MCF 10A (cell line): ENCODE measurements at regions of chr17 and their contacts with region 1.

Region 1: GRCh38 chr17:72725433-72726068 is 366.9 kb downstream of the SLC39A11 start:
- DNase-seq: peak; percentile 72
- H3K4me3 Mint-ChIP-seq: no peak overlapping the region
- H3K27ac Mint-ChIP-seq: no peak overlapping the region
- H3K4me1 Mint-ChIP-seq: peaks cover 19% of the 10 kb centered on the region
- H3K27me3 Mint-ChIP-seq: no peaks in the 10 kb centered on the region
- CTCF ChIP-seq: peak; percentile 78

Region 2: DNA sequence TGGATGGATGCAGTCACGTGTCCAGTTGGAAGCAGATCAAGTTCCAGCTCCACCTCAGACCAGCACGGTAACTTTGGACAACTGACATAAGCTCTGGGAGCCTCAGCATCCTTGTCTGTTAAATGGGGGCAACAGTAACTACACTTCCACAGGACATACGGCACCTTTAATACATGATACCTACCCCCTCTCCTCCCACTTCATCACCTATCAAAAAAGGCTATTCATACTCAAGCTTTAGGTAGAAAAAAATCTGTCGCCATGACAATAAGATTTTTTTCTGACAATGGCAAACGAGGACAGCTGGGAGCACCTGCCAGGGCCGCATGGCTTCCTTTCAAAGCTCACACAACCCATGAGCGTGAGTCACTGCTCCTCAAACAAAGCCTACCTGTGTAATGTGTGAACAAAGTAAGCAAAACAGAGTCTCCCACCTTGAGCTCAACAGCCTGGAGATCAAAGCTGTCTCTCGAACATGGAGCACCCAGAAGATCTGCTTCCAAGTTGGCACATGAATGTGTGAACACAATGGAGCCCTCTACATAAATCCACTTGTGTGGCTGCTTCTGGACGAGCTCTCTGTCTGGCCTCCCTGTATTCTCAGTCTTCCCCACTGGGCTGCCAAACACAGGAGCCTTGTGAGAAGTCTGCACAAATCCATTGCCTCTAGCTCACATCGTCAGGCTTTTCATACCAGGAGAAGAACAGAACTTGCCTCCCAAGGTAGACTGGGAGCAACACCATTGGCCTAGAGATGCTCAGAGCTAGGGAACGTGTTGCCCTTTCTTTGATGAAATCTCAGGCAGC is 145.0 kb before region 1 on chr17:
- CTCF ChIA-PET with region 1: interaction called, 17 read pairs
- POLR2A ChIA-PET with region 1: no interaction called
- intact Hi-C with region 1: no loop called
- DNase-seq: peak; percentile 47
- H3K4me3 Mint-ChIP-seq: no peak overlapping the region
- H3K27ac Mint-ChIP-seq: peak overlapping the region; percentile 19
- H3K4me1 Mint-ChIP-seq: peaks cover 40% of the 10 kb centered on the region
- H3K27me3 Mint-ChIP-seq: no peaks in the 10 kb centered on the region
- CTCF ChIP-seq: no peak

Region 3: GRCh38 chr17:72743037-72743467 is 17.5 kb after region 1 on chr17:
- CTCF ChIA-PET with region 1: interaction called, 11 read pairs
- POLR2A ChIA-PET with region 1: interaction called, 3 read pairs
- intact Hi-C with region 1: no loop called
- DNase-seq: no peak
- H3K4me3 Mint-ChIP-seq: no peak overlapping the region
- H3K27ac Mint-ChIP-seq: no peak overlapping the region
- H3K4me1 Mint-ChIP-seq: no peaks in the 10 kb centered on the region
- H3K27me3 Mint-ChIP-seq: no peaks in the 10 kb centered on the region
- CTCF ChIP-seq: no peak

Region 4: DNA sequence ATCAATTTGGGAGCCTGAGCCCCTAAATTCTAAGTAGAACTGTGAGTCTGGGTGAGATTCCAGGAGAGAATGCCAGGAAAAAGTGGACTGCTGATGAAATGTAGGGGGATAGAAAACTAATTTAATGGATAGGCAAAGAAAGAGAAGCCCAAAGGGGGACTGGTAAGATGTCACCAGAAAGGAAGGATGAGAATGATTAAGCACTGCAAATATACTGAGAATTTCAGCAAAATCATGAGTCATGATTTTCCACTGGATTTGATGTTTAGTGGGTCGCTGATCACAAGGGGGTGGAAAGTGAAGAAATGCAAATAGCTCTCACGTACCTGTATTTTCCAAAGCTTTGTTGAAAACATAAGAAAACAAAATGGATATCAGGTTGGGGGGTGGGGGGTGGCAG is 165.2 kb after region 1 on chr17:
- CTCF ChIA-PET with region 1: no interaction called
- POLR2A ChIA-PET with region 1: no interaction called
- intact Hi-C with region 1: no loop called
- DNase-seq: no peak
- H3K4me3 Mint-ChIP-seq: no peak overlapping the region
- H3K27ac Mint-ChIP-seq: no peak overlapping the region
- H3K4me1 Mint-ChIP-seq: no peaks in the 10 kb centered on the region
- H3K27me3 Mint-ChIP-seq: no peaks in the 10 kb centered on the region
- CTCF ChIP-seq: no peak

Region 5: GRCh38 chr17:73156166-73156840 is 430.8 kb after region 1 on chr17:
- CTCF ChIA-PET with region 1: interaction called, 63 read pairs
- POLR2A ChIA-PET with region 1: no interaction called
- intact Hi-C with region 1: loop called (anchors 1 kb)
- DNase-seq: peak; percentile 68
- H3K4me3 Mint-ChIP-seq: no peak overlapping the region
- H3K27ac Mint-ChIP-seq: no peak overlapping the region
- H3K4me1 Mint-ChIP-seq: no peaks in the 10 kb centered on the region
- H3K27me3 Mint-ChIP-seq: peaks cover 26% of the 10 kb centered on the region
- CTCF ChIP-seq: peak; percentile 55

Region 6: GRCh38 chr17:73231841-73232586 is 506.5 kb after region 1 on chr17:
- CTCF ChIA-PET with region 1: interaction called, 9 read pairs
- POLR2A ChIA-PET with region 1: interaction called, 6 read pairs
- intact Hi-C with region 1: loop called (anchors 1 kb)
- DNase-seq: peak; percentile 93
- H3K4me3 Mint-ChIP-seq: peak overlapping the region; percentile 97
- H3K27ac Mint-ChIP-seq: peak overlapping the region; percentile 90
- H3K4me1 Mint-ChIP-seq: peaks cover 28% of the 10 kb centered on the region
- H3K27me3 Mint-ChIP-seq: no peaks in the 10 kb centered on the region
- CTCF ChIP-seq: no peak

Region 7: GRCh38 chr17:73371285-73371684 is 645.7 kb after region 1 on chr17:
- CTCF ChIA-PET with region 1: interaction called, 7 read pairs
- POLR2A ChIA-PET with region 1: no interaction called
- intact Hi-C with region 1: loop called (anchors 2 kb)
- DNase-seq: peak; percentile 48
- H3K4me3 Mint-ChIP-seq: no peak overlapping the region
- H3K27ac Mint-ChIP-seq: no peak overlapping the region
- H3K4me1 Mint-ChIP-seq: peaks cover 8% of the 10 kb centered on the region
- H3K27me3 Mint-ChIP-seq: peaks cover 53% of the 10 kb centered on the region
- CTCF ChIP-seq: no peak